WTC11 (cell line): ENCODE measurements at regions of chr9 and their contacts with region 1.

Region 1: GRCh38 chr9:120916588-120916987 is 10.0 kb downstream of the TRAF1 start:
- DNase-seq: no peak
- ATAC-seq: peak; percentile 20; the same call in 1 of the 2 replicates
- H3K4me3 Mint-ChIP-seq: no peak overlapping the region
- H3K27ac Mint-ChIP-seq: no peak overlapping the region
- H3K4me1 Mint-ChIP-seq: peaks cover 43% of the 10 kb centered on the region
- H3K27me3 Mint-ChIP-seq: no peaks in the 10 kb centered on the region; the same call in 1 of the 2 replicates
- CTCF ChIP-seq: no peak

Region 2: DNA sequence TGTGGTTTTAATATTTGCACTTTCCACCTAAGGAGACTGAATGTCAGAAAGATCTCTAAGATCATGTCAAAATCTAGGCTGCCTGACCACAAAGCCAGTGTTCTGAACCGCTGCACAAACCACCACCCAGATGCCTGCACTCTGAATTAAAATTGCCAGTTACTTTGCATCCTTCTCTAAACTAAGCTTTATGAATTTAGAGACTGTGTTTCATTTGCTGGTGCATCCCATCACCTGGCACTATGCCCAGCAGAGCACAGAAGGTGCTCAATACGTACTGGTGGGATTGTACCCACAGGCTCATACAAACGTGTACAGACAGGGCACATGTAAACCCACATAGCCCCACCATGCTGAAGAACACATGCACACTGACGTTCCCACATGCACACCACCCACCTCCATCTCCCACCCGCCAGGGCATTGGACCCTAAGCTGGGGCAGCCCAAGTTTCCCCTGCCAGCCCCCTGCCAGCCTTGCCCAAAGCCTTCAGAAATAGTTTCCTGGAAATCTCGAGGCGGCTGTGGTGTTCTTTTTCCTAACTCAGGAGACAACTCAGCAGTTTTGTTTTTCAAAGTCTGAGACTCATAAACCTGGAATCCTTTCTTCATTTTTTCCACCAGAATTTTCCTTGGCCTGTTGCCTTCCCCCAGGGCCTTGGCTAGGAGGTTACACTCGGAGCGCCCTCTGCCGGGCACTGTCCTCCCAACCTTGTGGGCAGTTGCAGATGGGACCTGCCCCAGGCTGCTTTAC is 19.6 kb after region 1 on chr9:
- CTCF ChIA-PET with region 1: interaction called, 12 read pairs
- POLR2A ChIA-PET with region 1: interaction called, 3 read pairs
- DNase-seq: peak; percentile 95
- ATAC-seq: peak; percentile 97
- H3K4me3 Mint-ChIP-seq: no peak overlapping the region
- H3K27ac Mint-ChIP-seq: no peak overlapping the region
- H3K4me1 Mint-ChIP-seq: peaks cover 11% of the 10 kb centered on the region
- H3K27me3 Mint-ChIP-seq: peaks cover 6% of the 10 kb centered on the region; the same call in 1 of the 2 replicates
- CTCF ChIP-seq: peak; percentile 73; the same call in 1 of the 2 replicates